A673 (cell line): ENCODE measurements at regions of chrX and their contacts with region 1.

Region 1: GRCh38 chrX:128106630-128107029 is 54.4 kb upstream of the ACTRT1 start:
- DNase-seq: peak; percentile 60
- H3K4me3 ChIP-seq: no peak overlapping the region
- H3K27ac ChIP-seq: no peak overlapping the region
- H3K4me1 ChIP-seq: no peaks in the 10 kb centered on the region
- H3K27me3 ChIP-seq: no peaks in the 10 kb centered on the region
- CTCF ChIP-seq: peak; percentile 62

Region 2: DNA sequence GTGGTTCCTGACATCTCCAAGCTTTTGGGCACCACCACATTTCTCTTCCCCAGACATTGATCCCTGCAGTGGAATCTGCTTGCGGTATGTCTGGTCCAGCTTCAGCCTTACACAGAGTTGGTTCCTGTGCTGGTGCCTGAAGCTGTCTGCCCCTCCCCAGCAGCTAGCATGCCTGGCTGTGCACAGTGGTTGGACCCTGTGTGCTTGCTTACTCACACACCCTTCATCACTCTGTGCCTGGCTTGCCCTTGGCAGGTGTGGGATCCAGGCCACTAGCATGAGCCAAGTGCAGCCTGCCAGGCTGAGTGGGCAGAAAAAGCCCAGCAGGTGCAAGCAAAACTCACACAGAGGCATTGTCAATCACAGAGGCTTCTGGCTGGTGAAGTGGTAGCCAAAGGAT is 528.2 kb before region 1 on chrX:
- CTCF ChIA-PET with region 1: no interaction called
- POLR2A ChIA-PET with region 1: no interaction called
- intact Hi-C with region 1: no loop called
- DNase-seq: no peak
- H3K4me3 ChIP-seq: no peak overlapping the region
- H3K27ac ChIP-seq: no peak overlapping the region
- H3K4me1 ChIP-seq: no peaks in the 10 kb centered on the region
- H3K27me3 ChIP-seq: no peaks in the 10 kb centered on the region
- CTCF ChIP-seq: no peak

Region 3: GRCh38 chrX:128518508-128518907 is 411.9 kb after region 1 on chrX:
- CTCF ChIA-PET with region 1: no interaction called
- POLR2A ChIA-PET with region 1: no interaction called
- intact Hi-C with region 1: loop called (anchors 1 kb)
- DNase-seq: peak; percentile 51
- H3K4me3 ChIP-seq: no peak overlapping the region
- H3K27ac ChIP-seq: no peak overlapping the region
- H3K4me1 ChIP-seq: no peaks in the 10 kb centered on the region
- H3K27me3 ChIP-seq: no peaks in the 10 kb centered on the region
- CTCF ChIP-seq: peak; percentile 65

Region 4: GRCh38 chrX:128759745-128760144 is 653.1 kb after region 1 on chrX:
- CTCF ChIA-PET with region 1: no interaction called
- POLR2A ChIA-PET with region 1: no interaction called
- intact Hi-C with region 1: loop called (anchors 5 kb)
- DNase-seq: peak; percentile 75
- H3K4me3 ChIP-seq: no peak overlapping the region
- H3K27ac ChIP-seq: peak overlapping the region; percentile 84
- H3K4me1 ChIP-seq: no peaks in the 10 kb centered on the region
- H3K27me3 ChIP-seq: no peaks in the 10 kb centered on the region
- CTCF ChIP-seq: no peak

Region 5: GRCh38 chrX:128781493-128781892 is 674.9 kb after region 1 on chrX:
- CTCF ChIA-PET with region 1: no interaction called
- POLR2A ChIA-PET with region 1: no interaction called
- intact Hi-C with region 1: loop called (anchors 5 kb)
- DNase-seq: peak; percentile 81
- H3K4me3 ChIP-seq: no peak overlapping the region
- H3K27ac ChIP-seq: peak overlapping the region; percentile 55
- H3K4me1 ChIP-seq: peaks cover 7% of the 10 kb centered on the region
- H3K27me3 ChIP-seq: no peaks in the 10 kb centered on the region
- CTCF ChIP-seq: peak; percentile 62

Region 6: GRCh38 chrX:128975745-128976144 is 869.1 kb after region 1 on chrX:
- CTCF ChIA-PET with region 1: no interaction called
- POLR2A ChIA-PET with region 1: no interaction called
- intact Hi-C with region 1: loop called (anchors 5 kb)
- DNase-seq: peak; percentile 54
- H3K4me3 ChIP-seq: no peak overlapping the region
- H3K27ac ChIP-seq: no peak overlapping the region
- H3K4me1 ChIP-seq: no peaks in the 10 kb centered on the region
- H3K27me3 ChIP-seq: no peaks in the 10 kb centered on the region
- CTCF ChIP-seq: peak; percentile 79